PC-9 (cell line): ENCODE measurements at regions of chr4 and their contacts with region 1.

Region 1: DNA sequence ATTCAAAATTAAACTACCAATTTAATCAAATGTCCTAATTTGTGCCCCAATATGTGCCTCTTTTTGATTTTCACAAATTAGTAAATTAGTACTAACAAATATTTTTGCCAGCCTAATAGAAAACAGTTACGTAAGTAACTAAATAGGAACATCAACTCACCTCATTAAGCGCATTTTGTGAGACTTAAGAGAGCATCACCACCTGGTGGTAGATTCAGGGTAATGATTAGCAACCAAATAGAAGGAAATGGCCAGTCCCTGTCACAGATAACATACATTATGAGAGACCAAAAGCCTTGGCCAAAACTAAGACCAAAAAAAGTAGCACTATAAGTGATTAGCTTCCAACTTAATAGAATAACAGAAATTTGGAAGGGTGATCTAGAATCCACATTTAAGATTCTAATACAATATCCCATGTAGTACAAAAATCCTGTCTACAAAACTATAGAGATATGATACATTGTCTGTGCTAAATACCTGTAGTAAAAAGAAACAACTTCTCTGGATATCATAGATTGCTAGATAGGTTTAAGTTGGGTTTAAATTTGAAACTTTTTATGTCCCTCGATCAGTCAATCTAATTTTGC is 46.7 kb downstream of the C4orf46 start:
- DNase-seq: peak in 1 of 2 experiments; percentile 16
- H3K4me3 ChIP-seq: no peak overlapping the region
- H3K27ac ChIP-seq: no peak overlapping the region
- H3K4me1 ChIP-seq: no peaks in the 10 kb centered on the region
- H3K27me3 ChIP-seq: no peaks in the 10 kb centered on the region
- CTCF ChIP-seq: peak; percentile 79

Region 2: DNA sequence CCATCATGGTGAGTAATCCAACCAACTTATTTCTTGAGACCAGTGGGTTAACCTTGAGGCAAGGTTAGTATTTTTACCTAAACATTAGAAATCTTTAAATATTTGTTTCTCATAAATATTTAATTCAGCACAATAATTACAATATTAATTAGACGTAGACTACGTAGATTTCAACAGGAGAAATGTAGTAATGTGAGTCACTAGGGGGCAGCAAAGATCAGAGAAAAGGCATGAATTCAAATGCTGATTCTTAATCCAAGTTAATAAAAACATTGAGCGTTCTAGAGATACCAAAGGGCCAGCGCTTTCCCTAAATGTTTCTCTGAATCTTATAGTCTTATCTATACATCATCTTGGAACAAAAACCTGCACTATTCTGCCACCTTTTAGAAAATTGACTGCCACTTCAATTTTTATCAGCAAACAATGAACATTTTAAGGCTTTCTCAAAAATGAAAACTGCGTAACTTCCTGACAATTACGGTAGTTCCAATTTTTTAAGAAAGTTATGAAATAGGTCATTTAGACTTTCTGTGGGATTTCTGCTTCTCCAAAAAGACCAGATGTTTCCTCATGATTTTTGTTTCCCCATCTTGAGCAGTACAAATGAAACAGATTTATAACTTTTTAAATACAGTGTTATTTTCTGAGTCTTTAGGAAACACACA is 632.8 kb before region 1 on chr4:
- CTCF ChIA-PET with region 1: no interaction called
- POLR2A ChIA-PET with region 1: no interaction called
- intact Hi-C with region 1: loop called (anchors 10 kb)
- DNase-seq: peak in 1 of 2 experiments; percentile 30
- H3K4me3 ChIP-seq: no peak overlapping the region
- H3K27ac ChIP-seq: no peak overlapping the region
- H3K4me1 ChIP-seq: peaks cover 9% of the 10 kb centered on the region
- H3K27me3 ChIP-seq: no peaks in the 10 kb centered on the region
- CTCF ChIP-seq: peak; percentile 84

Region 3: GRCh38 chr4:158193171-158193749 is 431.7 kb before region 1 on chr4:
- CTCF ChIA-PET with region 1: no interaction called
- POLR2A ChIA-PET with region 1: no interaction called
- intact Hi-C with region 1: loop called (anchors 5 kb)
- DNase-seq: no peak
- H3K4me3 ChIP-seq: no peak overlapping the region
- H3K27ac ChIP-seq: no peak overlapping the region
- H3K4me1 ChIP-seq: no peaks in the 10 kb centered on the region
- H3K27me3 ChIP-seq: no peaks in the 10 kb centered on the region
- CTCF ChIP-seq: peak; percentile 66

Region 4: GRCh38 chr4:158259955-158260575 is 364.9 kb before region 1 on chr4:
- CTCF ChIA-PET with region 1: interaction called, 3 read pairs
- POLR2A ChIA-PET with region 1: no interaction called
- intact Hi-C with region 1: loop called (anchors 1 kb)
- DNase-seq: no peak
- H3K4me3 ChIP-seq: no peak overlapping the region
- H3K27ac ChIP-seq: no peak overlapping the region
- H3K4me1 ChIP-seq: no peaks in the 10 kb centered on the region
- H3K27me3 ChIP-seq: no peaks in the 10 kb centered on the region
- CTCF ChIP-seq: peak; percentile 70

Region 5: GRCh38 chr4:158302076-158302866 is 322.7 kb before region 1 on chr4:
- CTCF ChIA-PET with region 1: no interaction called
- POLR2A ChIA-PET with region 1: no interaction called
- intact Hi-C with region 1: no loop called
- DNase-seq: peak; percentile 46 to 61
- H3K4me3 ChIP-seq: no peak overlapping the region
- H3K27ac ChIP-seq: peak overlapping the region; percentile 57
- H3K4me1 ChIP-seq: peaks cover 12% of the 10 kb centered on the region
- H3K27me3 ChIP-seq: no peaks in the 10 kb centered on the region
- CTCF ChIP-seq: no peak

Region 6: DNA sequence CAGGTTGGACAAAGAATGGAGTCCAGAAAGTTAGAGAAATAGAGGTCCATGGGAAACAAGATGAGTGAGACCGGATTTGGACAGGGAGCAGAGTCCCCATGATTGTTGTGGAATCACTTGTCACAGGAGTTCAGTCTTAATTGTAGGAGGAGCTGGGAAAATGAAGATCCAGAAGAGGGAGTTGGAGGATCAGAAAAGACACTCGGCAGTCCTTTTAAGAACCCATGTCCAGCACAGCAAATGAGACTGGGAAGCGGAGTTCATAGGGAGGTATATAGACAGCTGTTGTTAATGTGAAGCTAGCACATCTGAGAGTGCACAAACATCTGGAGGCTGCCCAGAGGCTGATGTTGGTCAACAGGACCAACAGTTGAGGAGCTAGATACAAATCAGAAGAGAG is 214.7 kb before region 1 on chr4:
- CTCF ChIA-PET with region 1: no interaction called
- POLR2A ChIA-PET with region 1: no interaction called
- intact Hi-C with region 1: loop called (anchors 10 kb)
- DNase-seq: no peak
- H3K4me3 ChIP-seq: no peak overlapping the region
- H3K27ac ChIP-seq: no peak overlapping the region
- H3K4me1 ChIP-seq: no peaks in the 10 kb centered on the region
- H3K27me3 ChIP-seq: no peaks in the 10 kb centered on the region
- CTCF ChIP-seq: 0 out of 2 replicates have a peak, but pooled peaks have one; percentile 22

Region 7: DNA sequence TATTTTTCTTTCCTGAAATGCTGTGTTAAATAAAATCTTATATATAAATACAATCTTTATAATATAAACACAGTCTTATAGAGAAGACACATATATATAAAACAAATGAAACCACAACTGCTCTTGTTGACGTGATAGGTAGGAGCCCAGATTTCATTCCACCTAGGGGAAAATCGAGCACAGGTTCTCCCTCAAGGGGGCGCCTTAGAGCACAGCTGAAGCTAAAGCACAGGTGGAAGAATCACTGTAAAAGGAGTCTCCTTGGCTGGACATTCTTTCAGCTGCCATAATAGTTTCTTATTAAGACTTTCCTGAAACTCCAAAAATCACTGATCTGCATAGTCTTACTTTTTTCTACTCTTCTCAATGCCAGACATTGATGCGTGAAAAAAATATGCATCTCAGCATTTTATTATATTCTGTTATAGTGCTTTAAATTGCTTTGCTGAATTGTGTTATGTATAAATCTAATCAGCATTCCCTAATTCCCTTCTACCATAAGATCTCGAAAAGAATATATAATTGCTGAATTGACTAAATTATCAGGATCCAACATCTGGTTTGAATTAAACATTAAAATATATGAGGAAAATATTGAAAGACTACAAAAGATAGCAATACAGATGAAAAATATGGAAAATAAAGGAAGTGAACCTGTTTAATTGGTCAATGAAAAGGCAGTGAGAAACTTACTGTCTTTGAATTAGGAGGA is 128.8 kb before region 1 on chr4:
- CTCF ChIA-PET with region 1: interaction called, 3 read pairs
- POLR2A ChIA-PET with region 1: no interaction called
- intact Hi-C with region 1: loop called (anchors 10 kb)
- DNase-seq: peak in 1 of 2 experiments; percentile 8
- H3K4me3 ChIP-seq: no peak overlapping the region
- H3K27ac ChIP-seq: no peak overlapping the region
- H3K4me1 ChIP-seq: no peaks in the 10 kb centered on the region
- H3K27me3 ChIP-seq: no peaks in the 10 kb centered on the region
- CTCF ChIP-seq: peak; percentile 41; the same call in 1 of the 2 replicates

Region 8: GRCh38 chr4:158610790-158611189 is 14.2 kb before region 1 on chr4:
- CTCF ChIA-PET with region 1: no interaction called
- POLR2A ChIA-PET with region 1: no interaction called
- intact Hi-C with region 1: no loop called
- DNase-seq: no peak
- H3K4me3 ChIP-seq: no peak overlapping the region
- H3K27ac ChIP-seq: no peak overlapping the region
- H3K4me1 ChIP-seq: no peaks in the 10 kb centered on the region
- H3K27me3 ChIP-seq: no peaks in the 10 kb centered on the region
- CTCF ChIP-seq: no peak

Region 9: DNA sequence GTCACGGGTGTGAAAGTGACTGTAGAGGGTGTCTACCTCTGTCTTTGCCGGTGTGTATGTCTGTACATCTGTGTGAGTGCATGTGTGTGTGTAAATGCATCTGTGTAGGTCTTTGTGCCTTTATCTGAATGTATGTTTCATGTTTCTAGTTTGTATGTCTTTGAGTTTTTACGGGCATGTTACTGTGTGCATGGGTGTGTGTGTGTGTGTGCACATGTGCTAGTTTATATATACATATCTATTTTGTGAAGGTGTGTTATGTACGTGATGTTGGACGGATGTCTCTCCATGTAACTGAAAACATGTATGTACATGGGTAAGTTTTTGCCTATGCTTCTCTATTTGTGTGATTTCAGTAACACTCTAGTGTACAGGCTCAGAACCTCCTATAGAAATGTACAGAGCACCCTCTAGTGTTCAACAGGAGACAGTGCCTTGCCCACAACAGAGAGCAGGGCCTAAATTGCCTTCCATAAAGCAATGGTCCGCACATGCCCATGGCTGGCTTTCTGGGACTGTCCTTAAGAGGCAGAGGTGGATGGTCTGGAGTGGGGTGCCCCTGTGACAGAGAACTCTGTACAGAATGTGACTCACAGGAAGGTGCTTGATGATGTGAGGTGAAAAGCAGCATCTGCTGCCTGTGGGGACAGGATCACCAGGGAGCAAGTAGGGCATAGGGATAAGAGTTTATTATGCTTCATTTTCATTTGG is 821.4 kb after region 1 on chr4:
- CTCF ChIA-PET with region 1: no interaction called
- POLR2A ChIA-PET with region 1: no interaction called
- intact Hi-C with region 1: loop called (anchors 10 kb)
- DNase-seq: peak; percentile 39 to 49
- H3K4me3 ChIP-seq: no peak overlapping the region
- H3K27ac ChIP-seq: no peak overlapping the region
- H3K4me1 ChIP-seq: no peaks in the 10 kb centered on the region
- H3K27me3 ChIP-seq: no peaks in the 10 kb centered on the region
- CTCF ChIP-seq: peak; percentile 82